Calu3 (cell line): ENCODE measurements at regions of chr6 and their contacts with region 1.

Region 1: DNA sequence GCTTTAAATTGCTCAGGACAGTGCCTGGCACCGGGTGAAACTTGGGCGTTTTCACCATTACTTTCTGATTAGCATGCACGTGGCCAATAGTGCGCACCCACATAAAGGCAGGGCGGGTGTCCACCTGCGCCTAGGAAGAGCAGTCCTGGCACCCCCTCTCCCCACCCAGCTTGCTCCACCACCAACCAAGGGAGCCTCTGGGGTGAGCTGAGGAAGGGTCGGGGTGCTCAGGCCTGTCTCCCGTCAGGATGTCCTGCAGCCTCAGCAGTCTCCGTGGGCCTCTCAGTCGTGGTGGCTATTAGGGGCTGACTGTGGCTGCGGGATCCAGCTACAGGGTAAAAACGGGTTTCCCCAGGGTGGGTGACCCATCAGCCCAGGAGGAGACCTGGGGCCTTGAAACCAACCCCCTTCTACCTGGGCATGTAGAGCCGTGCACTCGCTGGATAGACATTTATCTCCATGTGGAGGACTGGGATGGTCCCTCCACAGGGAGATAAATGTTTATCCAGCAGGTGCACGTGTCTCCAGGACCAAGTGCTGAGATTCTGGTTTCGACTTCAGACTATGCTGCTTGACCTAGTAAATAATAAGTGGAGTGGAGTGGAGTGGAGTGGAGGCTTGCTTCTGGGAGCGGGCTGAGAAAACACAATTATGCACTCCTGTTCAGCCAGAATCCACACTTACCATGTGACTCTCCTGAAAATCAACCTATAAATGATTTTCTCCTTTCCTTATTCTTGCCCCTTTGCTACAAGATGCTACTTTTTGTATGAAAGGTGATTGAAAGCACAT is 91.1 kb downstream of the ZDHHC14 start:
- DNase-seq: no peak
- H3K4me3 Mint-ChIP-seq: no peak overlapping the region
- H3K27ac Mint-ChIP-seq: no peak overlapping the region
- H3K4me1 Mint-ChIP-seq: peaks cover 6% of the 10 kb centered on the region
- H3K27me3 Mint-ChIP-seq: no peaks in the 10 kb centered on the region
- CTCF ChIP-seq: no peak

Region 2: GRCh38 chr6:156953479-156954146 is 518.5 kb before region 1 on chr6:
- CTCF ChIA-PET with region 1: no interaction called
- intact Hi-C with region 1: no loop called
- DNase-seq: peak; percentile 73
- H3K4me3 Mint-ChIP-seq: peak overlapping the region; percentile 26
- H3K27ac Mint-ChIP-seq: peak overlapping the region; percentile 58
- H3K4me1 Mint-ChIP-seq: peaks cover 15% of the 10 kb centered on the region
- H3K27me3 Mint-ChIP-seq: no peaks in the 10 kb centered on the region
- CTCF ChIP-seq: no peak

Region 3: GRCh38 chr6:157561929-157562810 is 90.1 kb after region 1 on chr6:
- CTCF ChIA-PET with region 1: no interaction called
- intact Hi-C with region 1: no loop called
- DNase-seq: no peak
- H3K4me3 Mint-ChIP-seq: no peak overlapping the region
- H3K27ac Mint-ChIP-seq: no peak overlapping the region
- H3K4me1 Mint-ChIP-seq: no peaks in the 10 kb centered on the region
- H3K27me3 Mint-ChIP-seq: no peaks in the 10 kb centered on the region
- CTCF ChIP-seq: no peak

Region 4: DNA sequence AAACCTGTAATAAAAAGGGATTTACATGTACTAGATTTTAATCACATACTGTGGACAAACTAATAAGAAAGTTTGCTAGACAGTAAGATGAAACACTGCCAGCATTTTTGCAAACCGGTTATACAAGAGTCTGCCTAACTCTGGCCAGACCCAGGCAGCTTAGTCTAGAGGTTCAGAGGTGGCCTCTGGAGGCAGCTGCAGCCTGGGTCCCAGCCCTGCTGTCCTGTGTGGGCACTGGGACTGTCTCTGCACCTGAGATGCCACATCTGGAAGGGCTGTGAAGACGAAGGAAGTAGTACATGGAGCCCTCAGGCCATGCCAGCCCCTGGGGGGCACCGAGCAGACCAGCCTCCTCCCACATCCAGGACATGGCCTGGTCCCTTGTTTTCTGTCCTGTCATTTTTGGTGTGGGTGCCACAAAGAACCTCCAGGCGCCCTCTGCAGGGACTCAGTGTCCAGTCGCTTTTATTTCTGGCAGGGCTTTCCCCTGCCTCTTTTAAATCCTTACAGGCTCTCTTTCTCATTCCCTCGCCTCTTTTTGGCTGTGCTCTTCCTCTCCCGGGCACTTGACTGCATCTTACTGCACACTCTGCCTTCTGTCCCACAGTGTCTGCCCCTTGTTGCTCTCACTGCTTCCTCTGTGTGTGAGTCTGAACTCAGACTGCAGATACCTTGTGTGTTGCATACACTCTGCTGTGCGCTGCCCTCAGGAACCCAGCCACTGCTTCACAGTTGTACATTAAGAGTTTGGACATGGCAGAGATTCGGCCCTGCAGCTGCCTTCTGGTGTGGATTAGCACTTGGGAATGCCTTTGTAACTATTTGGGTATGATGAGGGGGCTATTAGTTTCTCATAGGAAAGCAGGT is 125.6 kb after region 1 on chr6:
- CTCF ChIA-PET with region 1: no interaction called
- intact Hi-C with region 1: loop called (anchors 10 kb)
- DNase-seq: peak; percentile 44
- H3K4me3 Mint-ChIP-seq: no peak overlapping the region
- H3K27ac Mint-ChIP-seq: peak overlapping the region; percentile 30
- H3K4me1 Mint-ChIP-seq: peaks cover 17% of the 10 kb centered on the region
- H3K27me3 Mint-ChIP-seq: no peaks in the 10 kb centered on the region
- CTCF ChIP-seq: peak; percentile 39